HCT116 (cell line): ENCODE measurements at regions of chr7 and their contacts with region 1.

Region 1: GRCh38 chr7:141975806-141976523 is 2.4 kb upstream of the TAS2R38 start:
- DNase-seq: peak; percentile 60
- ATAC-seq: peak; percentile 96
- H3K4me3 ChIP-seq: peak overlapping the region; percentile 17 to 30
- H3K27ac ChIP-seq: no peak overlapping the region
- H3K4me1 ChIP-seq: peaks cover 0 to 5% of the 10 kb centered on the region in 2 experiments; a peak in 2 of 4 replicates
- H3K27me3 ChIP-seq: no peaks in the 10 kb centered on the region
- CTCF ChIP-seq: peak; percentile 78 to 98 (median 92)
- POLR2A ChIP-seq: no peak
- RAD21 ChIP-seq: peak; percentile 93

Region 2: DNA sequence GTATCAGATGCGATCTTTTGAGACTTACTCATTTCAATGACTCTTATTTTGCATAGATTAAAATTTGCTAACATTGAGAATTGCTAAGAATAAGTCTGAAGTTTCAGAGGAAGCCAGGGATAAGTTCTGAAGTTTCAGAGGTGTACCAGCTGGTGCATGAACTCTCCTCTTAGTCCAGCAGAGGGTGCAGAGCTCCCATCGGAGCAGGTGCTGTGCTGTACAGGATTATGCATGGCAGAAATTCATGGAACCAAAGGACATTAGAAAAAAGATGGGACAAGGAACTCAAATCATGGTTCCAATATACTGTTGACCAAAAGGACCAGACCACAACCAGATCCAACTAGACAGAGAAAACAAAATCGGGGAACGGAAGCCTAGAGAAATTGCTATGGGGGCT is 177.4 kb after region 1 on chr7:
- CTCF ChIA-PET with region 1: interaction called, 10 read pairs
- POLR2A ChIA-PET with region 1: no interaction called
- RAD21 ChIA-PET with region 1: no interaction called
- intact Hi-C with region 1: no loop called
- DNase-seq: no peak
- ATAC-seq: peak; percentile 78
- H3K4me3 ChIP-seq: no peak overlapping the region
- H3K27ac ChIP-seq: no peak overlapping the region
- H3K4me1 ChIP-seq: no peaks in the 10 kb centered on the region
- H3K27me3 ChIP-seq: no peaks in the 10 kb centered on the region
- CTCF ChIP-seq: peak; percentile 20 to 54 (median 53); a peak in 5 of 6 replicates
- POLR2A ChIP-seq: no peak
- RAD21 ChIP-seq: peak; percentile 52

Region 3: DNA sequence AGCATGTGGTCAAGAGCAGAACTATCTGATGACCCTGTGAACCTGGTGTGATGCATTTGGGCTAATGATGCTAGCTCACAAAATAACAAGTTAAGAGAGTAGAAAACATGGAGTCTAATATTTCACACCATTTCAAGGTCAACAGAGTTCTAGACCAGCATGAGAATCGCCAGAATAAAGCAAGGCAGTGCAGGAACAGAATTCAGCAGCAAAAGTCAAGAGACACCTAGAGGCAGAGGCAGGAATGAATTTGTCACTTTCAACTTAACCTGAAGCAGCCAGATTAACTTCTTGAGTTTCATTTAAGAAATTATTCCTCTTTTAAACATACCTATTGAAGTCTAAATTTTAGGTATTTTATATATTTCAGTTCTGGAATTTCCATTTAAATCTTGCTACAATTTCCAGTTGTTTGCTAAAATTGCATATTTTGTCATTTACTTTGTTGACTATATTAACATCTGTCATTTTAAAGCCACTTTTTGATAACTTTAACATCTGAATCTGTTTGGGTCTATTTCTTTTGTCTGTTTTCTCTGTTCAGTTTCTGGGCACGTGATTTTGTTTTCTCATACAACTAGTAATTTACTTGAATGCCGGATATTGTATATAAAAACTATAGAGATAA is 326.1 kb after region 1 on chr7:
- CTCF ChIA-PET with region 1: interaction called, 15 read pairs
- POLR2A ChIA-PET with region 1: no interaction called
- RAD21 ChIA-PET with region 1: no interaction called
- intact Hi-C with region 1: loop called (anchors 2 kb)
- DNase-seq: peak; percentile 22
- ATAC-seq: peak; percentile 43
- H3K4me3 ChIP-seq: no peak overlapping the region
- H3K27ac ChIP-seq: no peak overlapping the region
- H3K4me1 ChIP-seq: no peaks in the 10 kb centered on the region
- H3K27me3 ChIP-seq: no peaks in the 10 kb centered on the region
- CTCF ChIP-seq: peak; percentile 62 to 68 (median 64)
- POLR2A ChIP-seq: no peak
- RAD21 ChIP-seq: peak; percentile 43